ENCODE measurements at regions of chr1 and their contacts with region 1.

Region 1: DNA sequence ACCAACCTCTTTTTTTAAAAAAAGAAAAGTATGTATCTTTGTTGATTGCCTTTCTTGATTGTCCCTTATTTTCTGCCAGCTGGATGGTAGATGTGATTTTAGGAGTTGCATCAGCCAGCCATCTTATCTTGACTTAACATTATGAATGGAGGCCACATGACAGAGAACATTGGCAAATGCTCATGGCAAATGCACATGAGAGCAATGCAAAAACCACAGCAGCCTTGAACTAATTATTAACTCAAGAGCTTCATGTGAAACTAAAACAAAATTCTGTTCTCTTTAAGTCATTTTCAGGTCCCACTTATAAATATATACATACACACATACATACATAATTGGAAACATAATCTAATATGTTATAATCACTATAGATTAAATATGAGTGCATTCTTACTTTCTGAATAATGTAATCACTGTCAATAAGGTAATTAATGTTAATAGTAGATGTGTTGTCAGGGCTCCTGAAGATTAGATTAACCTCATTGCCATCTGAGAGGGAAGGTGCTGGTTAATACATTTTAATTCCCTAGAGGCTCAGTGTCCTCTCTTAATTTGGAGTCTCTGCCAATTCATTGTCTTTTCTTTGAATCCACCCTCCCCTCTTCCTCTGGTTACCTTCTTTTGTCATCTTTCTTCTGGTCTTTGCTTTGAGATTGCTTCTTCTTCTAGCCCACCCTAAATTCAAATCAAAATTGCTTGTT is 962.2 kb downstream of the ADGRL2 start:
- DNase-seq: no peak
- H3K4me3 ChIP-seq: no peak overlapping the region
- H3K27ac ChIP-seq: no peak overlapping the region
- H3K4me1 ChIP-seq: no peaks in the 10 kb centered on the region
- H3K27me3 ChIP-seq: no peaks in the 10 kb centered on the region
- CTCF ChIP-seq: no peak
- POLR2A ChIP-seq: no peak

Region 2: DNA sequence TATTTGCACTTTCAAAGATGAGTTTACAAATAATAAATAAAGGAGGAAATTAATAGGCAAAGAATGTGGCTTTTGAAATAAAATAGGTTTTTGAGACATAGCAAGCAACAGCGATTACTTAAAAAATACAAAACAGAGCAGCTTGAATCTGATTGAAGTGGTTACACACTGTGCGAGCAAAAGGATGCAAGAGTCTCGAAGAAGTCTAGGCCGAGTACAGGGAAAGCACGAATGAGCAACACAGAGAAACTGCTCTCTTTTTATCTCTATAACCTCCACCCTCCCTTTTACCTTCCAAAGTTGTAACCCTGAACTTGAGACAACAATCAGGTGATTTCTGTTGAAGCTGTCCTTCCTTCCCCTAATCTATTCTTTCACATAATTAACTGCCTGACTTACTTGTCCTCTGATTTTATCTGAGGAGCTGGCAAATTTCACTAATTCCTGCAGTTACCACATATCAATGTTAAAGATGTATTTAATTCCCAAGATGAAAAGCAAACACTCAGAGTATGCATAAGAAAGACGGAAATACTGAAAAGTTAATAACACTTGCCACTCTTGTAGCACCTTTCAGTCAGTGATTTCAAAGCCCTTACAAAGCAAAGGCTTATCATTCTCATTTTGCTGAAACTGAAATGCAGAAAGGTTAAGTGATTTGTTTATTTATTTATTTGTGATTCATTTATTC is 67.9 kb after region 1 on chr1:
- intact Hi-C with region 1: no loop called
- DNase-seq: no peak
- H3K4me3 ChIP-seq: no peak overlapping the region
- H3K27ac ChIP-seq: no peak overlapping the region
- H3K4me1 ChIP-seq: no peaks in the 10 kb centered on the region
- H3K27me3 ChIP-seq: no peaks in the 10 kb centered on the region
- CTCF ChIP-seq: no peak
- POLR2A ChIP-seq: no peak

Region 3: GRCh38 chr1:83750201-83750600 is 987.2 kb after region 1 on chr1:
- intact Hi-C with region 1: loop called (anchors 5 kb)
- DNase-seq: no peak
- H3K4me3 ChIP-seq: no peak overlapping the region
- H3K27ac ChIP-seq: no peak overlapping the region
- H3K4me1 ChIP-seq: no peaks in the 10 kb centered on the region
- H3K27me3 ChIP-seq: no peaks in the 10 kb centered on the region
- CTCF ChIP-seq: no peak
- POLR2A ChIP-seq: no peak

Measured in breast epithelium (tissue), 4 donors.